Calu3 (cell line): ENCODE measurements at regions of chr2 and their contacts with region 1.

Region 1: DNA sequence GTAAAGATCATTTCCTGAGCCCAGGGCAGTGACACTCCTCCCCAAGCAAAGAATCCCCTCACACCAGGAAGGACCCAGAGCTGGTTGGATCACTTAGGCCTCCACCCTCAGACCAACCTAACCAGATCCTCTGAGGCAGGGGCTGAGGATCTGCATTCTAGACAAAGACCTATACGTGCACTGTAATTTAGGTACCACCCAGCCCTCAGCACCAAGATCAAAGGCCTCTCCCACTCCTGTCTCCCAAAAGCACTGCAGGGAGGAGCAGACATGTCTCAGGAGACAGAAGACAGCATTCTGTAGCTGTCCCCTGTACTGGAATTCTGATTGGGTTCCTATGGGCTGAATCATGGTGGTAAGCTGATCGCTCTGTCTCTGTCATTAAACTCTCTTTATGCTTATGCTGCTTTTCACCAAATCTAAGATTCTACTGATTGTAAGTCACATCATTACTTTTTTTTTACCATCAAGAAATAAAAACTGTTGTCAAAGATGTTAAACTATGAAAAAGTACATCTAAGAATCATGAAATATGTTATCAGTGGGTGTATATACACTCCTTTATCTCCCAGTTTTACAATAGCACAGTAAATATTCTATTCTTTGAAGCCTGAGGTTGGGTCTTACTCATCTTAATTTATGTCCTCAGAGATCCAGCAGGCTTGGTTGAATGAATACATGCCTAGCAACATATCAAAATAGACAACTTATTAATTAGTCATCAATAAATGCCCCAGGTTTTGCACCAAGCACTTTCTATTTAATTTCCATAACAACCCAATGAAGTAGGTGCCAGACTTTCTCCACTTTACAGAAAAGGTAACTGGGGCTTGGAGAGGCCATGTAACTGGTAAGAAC is 28.3 kb downstream of the MCFD2 start:
- DNase-seq: no peak
- H3K4me3 Mint-ChIP-seq: no peak overlapping the region
- H3K27ac Mint-ChIP-seq: no peak overlapping the region
- H3K4me1 Mint-ChIP-seq: no peaks in the 10 kb centered on the region
- H3K27me3 Mint-ChIP-seq: peaks cover 26% of the 10 kb centered on the region
- CTCF ChIP-seq: no peak

Region 2: DNA sequence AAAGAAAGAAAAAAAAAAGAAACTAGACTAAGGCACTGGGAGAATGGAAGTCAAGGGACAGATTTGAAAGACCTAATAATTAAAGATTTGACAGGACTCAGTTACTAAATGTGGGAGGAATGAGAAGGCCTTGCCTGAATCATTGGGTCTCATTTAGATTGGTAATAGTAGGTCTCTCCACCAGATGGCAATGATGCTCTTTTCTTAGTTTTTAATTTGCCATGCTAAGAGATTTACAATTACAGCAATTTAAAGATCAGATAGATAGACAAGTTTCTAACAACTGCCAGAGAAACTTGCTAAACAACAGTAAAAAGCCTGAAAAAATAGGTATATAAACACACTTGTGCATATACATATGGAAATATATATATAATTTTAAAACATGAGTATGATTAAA is 254.9 kb before region 1 on chr2:
- CTCF ChIA-PET with region 1: no interaction called
- intact Hi-C with region 1: loop called (anchors 1 kb)
- DNase-seq: no peak
- H3K4me3 Mint-ChIP-seq: no peak overlapping the region
- H3K27ac Mint-ChIP-seq: no peak overlapping the region
- H3K4me1 Mint-ChIP-seq: no peaks in the 10 kb centered on the region
- H3K27me3 Mint-ChIP-seq: no peaks in the 10 kb centered on the region
- CTCF ChIP-seq: peak; percentile 25

Region 3: DNA sequence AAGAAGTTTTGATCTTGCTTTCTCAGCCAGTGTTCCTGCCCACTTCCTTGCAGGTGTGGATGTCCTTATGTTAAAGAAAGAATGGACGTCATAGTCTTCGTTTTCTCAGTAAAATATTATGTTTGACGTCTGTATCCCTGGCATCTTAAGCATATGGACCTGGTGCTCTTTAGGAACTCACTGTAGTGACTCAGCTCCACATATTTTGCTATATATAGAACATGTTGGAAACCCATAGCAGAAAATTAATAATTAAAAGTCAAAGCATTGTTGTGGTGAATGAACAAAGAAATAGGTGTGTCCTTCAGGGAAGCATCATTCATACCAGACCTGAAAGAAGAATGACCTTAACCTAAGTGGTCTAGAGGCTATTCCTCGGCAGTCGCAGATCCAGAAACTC is 167.8 kb before region 1 on chr2:
- CTCF ChIA-PET with region 1: no interaction called
- intact Hi-C with region 1: no loop called
- DNase-seq: no peak
- H3K4me3 Mint-ChIP-seq: no peak overlapping the region
- H3K27ac Mint-ChIP-seq: no peak overlapping the region
- H3K4me1 Mint-ChIP-seq: peaks cover 36% of the 10 kb centered on the region
- H3K27me3 Mint-ChIP-seq: no peaks in the 10 kb centered on the region
- CTCF ChIP-seq: no peak

Region 4: GRCh38 chr2:46983065-46983801 is 96.0 kb after region 1 on chr2:
- CTCF ChIA-PET with region 1: no interaction called
- intact Hi-C with region 1: no loop called
- DNase-seq: no peak
- H3K4me3 Mint-ChIP-seq: no peak overlapping the region
- H3K27ac Mint-ChIP-seq: no peak overlapping the region
- H3K4me1 Mint-ChIP-seq: peaks cover 37% of the 10 kb centered on the region
- H3K27me3 Mint-ChIP-seq: no peaks in the 10 kb centered on the region
- CTCF ChIP-seq: no peak

Region 5: GRCh38 chr2:47046271-47046670 is 159.0 kb after region 1 on chr2:
- CTCF ChIA-PET with region 1: no interaction called
- intact Hi-C with region 1: no loop called
- DNase-seq: no peak
- H3K4me3 Mint-ChIP-seq: no peak overlapping the region
- H3K27ac Mint-ChIP-seq: no peak overlapping the region
- H3K4me1 Mint-ChIP-seq: peaks cover 36% of the 10 kb centered on the region
- H3K27me3 Mint-ChIP-seq: no peaks in the 10 kb centered on the region
- CTCF ChIP-seq: no peak